IMR-90 (cell line): ENCODE measurements at regions of chr13 and their contacts with region 1.

Region 1: GRCh38 chr13:26707122-26708006 is 53.2 kb downstream of the GPR12 start:
- DNase-seq: peak; percentile 58
- ATAC-seq: peak; percentile 99
- H3K4me3 ChIP-seq: no peak overlapping the region
- H3K27ac ChIP-seq: no peak overlapping the region
- H3K4me1 ChIP-seq: no peaks in the 10 kb centered on the region
- H3K27me3 ChIP-seq: peaks cover 16% of the 10 kb centered on the region
- CTCF ChIP-seq: peak; percentile 64
- POLR2A ChIP-seq: no peak
- RAD21 ChIP-seq: peak; percentile 68

Region 2: GRCh38 chr13:26502826-26503225 is 204.5 kb before region 1 on chr13:
- CTCF ChIA-PET with region 1: no interaction called
- POLR2A ChIA-PET with region 1: no interaction called
- dilution Hi-C with region 1: no loop called
- in situ Hi-C with region 1: no loop called
- intact Hi-C with region 1: no loop called
- DNase-seq: peak; percentile 96
- ATAC-seq: peak; percentile 72
- H3K4me3 ChIP-seq: no peak overlapping the region
- H3K27ac ChIP-seq: peak overlapping the region; percentile 48
- H3K4me1 ChIP-seq: peaks cover 15% of the 10 kb centered on the region
- H3K27me3 ChIP-seq: no peaks in the 10 kb centered on the region
- CTCF ChIP-seq: peak; percentile 29
- POLR2A ChIP-seq: no peak; the same call in 1 of the 2 replicates
- RAD21 ChIP-seq: peak; percentile 37; the same call in 1 of the 2 replicates

Region 3: DNA sequence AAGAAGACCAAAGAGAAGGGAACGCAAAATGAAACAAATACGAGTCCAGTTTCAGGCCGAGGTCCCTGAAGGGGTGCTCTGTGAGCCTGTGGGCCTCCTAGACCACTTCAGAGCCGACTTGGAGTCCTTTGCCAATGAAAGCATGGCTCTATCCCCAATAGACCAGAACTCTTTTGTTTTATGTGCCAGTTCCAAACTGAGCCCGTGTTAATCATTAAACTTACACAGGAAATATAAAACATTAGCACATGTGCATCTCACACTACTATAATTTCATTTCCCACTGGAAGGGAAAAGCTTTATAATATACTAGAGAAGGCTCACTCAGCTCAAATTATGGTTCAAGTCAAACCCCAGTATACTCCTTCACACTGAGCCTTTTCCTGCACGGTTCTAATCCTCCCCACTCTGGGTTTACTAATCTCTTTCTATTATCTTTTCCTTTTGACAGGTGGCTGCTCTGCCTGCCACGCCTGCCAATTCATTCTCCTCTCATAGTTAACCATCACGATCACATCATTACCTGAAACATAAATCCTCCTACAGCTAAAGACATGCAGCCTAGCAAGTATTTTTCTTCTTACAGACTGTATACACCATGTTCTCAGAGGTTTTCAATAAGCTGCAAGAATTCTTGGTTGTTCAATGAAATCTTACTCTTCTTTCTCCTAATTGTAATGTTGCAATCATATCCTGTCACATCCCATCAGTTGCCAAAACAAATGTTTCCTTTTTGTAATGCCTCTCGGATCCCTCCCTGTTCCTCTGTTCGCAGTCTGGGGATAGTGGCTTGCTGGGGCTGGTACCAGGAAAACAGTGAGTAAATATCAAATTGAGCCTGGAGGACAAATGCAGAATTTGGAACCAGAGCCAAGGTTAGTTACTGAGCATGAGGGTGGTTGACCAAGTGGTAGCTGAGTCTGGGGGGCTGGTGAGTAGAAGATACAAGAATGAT is 168.7 kb before region 1 on chr13:
- CTCF ChIA-PET with region 1: no interaction called
- POLR2A ChIA-PET with region 1: no interaction called
- dilution Hi-C with region 1: no loop called
- in situ Hi-C with region 1: no loop called
- intact Hi-C with region 1: no loop called
- DNase-seq: no peak
- ATAC-seq: no peak
- H3K4me3 ChIP-seq: no peak overlapping the region
- H3K27ac ChIP-seq: no peak overlapping the region
- H3K4me1 ChIP-seq: no peaks in the 10 kb centered on the region
- H3K27me3 ChIP-seq: peaks cover 41% of the 10 kb centered on the region
- CTCF ChIP-seq: no peak
- POLR2A ChIP-seq: no peak
- RAD21 ChIP-seq: no peak

Region 4: GRCh38 chr13:26867451-26868091 is 160.2 kb after region 1 on chr13:
- CTCF ChIA-PET with region 1: no interaction called
- POLR2A ChIA-PET with region 1: no interaction called
- dilution Hi-C with region 1: no loop called
- in situ Hi-C with region 1: no loop called
- intact Hi-C with region 1: loop called (anchors 2 kb)
- DNase-seq: peak; percentile 14
- ATAC-seq: peak; percentile 57
- H3K4me3 ChIP-seq: no peak overlapping the region
- H3K27ac ChIP-seq: no peak overlapping the region
- H3K4me1 ChIP-seq: no peaks in the 10 kb centered on the region
- H3K27me3 ChIP-seq: no peaks in the 10 kb centered on the region
- CTCF ChIP-seq: no peak
- POLR2A ChIP-seq: no peak
- RAD21 ChIP-seq: no peak

Region 5: DNA sequence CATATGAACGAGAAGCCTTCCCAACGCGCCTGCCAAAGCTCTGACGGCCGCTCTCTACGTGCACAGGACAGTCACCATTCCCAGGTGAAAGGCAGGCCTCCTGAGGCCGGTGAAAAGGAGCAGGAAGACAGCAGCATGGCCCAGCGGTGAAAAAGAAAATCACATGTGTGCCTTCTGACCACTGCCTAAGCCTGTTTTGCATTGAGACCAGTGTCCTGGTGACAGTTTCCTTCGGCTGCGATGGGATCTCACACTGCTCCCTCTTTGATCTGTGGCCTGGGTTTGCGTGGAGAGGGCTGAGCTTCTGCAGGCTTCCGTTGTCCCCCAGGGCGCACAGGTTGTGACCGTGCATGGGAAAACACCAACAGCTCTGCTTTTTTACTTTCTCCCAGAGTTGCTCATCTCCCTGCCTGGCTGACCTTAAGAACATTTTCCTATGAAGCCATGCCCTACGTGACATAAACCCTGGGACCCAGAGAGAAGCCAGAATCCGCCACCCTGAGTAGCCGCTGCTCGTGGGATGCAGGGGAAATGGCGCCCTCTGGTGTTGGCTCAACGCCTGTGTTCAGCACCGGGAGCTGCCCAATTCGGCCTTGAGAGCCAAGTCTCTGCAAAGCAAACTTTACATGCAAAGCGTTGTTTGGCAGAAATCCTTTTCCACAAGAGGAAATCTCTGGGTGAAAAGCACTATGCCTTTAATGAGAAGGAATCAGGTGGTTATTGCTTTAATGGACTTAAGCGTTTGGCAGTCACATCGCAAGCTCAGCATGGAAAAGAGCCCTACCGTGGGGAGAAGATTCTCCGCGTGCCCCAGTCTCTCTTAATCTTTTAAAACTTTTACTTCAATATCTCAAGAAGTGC is 165.4 kb after region 1 on chr13:
- CTCF ChIA-PET with region 1: interaction called, 3 read pairs
- POLR2A ChIA-PET with region 1: no interaction called
- dilution Hi-C with region 1: no loop called
- in situ Hi-C with region 1: no loop called
- intact Hi-C with region 1: loop called (anchors 1 kb)
- DNase-seq: peak; percentile 31
- ATAC-seq: peak; percentile 65; the same call in 1 of the 2 replicates
- H3K4me3 ChIP-seq: no peak overlapping the region
- H3K27ac ChIP-seq: no peak overlapping the region
- H3K4me1 ChIP-seq: no peaks in the 10 kb centered on the region
- H3K27me3 ChIP-seq: no peaks in the 10 kb centered on the region
- CTCF ChIP-seq: peak; percentile 53
- POLR2A ChIP-seq: no peak
- RAD21 ChIP-seq: peak; percentile 39

Region 6: DNA sequence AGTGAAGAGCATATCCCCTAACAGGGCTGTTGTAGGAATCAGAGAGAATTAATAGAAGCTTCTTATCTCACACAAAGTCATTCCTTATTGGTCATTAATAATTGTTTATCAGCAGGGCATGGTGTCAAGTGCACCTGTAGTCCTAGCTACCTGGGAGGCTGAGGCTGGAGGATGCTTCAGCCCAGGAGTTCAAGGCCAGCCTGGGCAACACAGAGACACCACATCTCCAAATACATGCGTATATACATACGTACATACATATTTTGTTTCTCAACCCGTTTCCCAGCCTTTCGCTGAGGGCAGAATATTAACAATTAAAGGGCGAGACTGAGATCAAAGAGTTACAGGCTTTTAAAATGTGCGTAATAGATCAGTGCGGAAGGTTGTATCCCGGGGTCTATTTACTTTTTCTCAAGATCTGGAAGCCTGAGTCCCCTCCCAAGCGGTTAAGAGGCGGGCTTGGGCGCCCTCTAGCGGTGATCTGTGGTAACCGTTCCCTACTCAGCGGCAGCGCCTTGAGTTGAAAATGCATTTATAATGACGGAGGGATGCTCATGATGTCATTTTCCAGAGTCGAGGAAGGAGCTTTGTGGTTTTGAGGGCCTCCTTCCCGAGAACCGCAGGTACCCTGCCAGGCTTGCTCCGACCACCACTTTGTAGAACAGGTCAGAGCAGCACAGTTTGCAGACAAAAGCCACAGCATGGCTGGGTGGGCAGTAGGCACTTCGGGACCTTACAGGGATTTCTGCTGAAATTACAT is 222.8 kb after region 1 on chr13:
- CTCF ChIA-PET with region 1: no interaction called
- POLR2A ChIA-PET with region 1: no interaction called
- dilution Hi-C with region 1: no loop called
- in situ Hi-C with region 1: no loop called
- intact Hi-C with region 1: loop called (anchors 1 kb)
- DNase-seq: peak; percentile 64
- ATAC-seq: peak; percentile 98
- H3K4me3 ChIP-seq: no peak overlapping the region
- H3K27ac ChIP-seq: no peak overlapping the region
- H3K4me1 ChIP-seq: no peaks in the 10 kb centered on the region
- H3K27me3 ChIP-seq: peaks cover 23% of the 10 kb centered on the region
- CTCF ChIP-seq: peak; percentile 89
- POLR2A ChIP-seq: no peak
- RAD21 ChIP-seq: peak; percentile 75